ENCODE measurements at regions of chr4 and their contacts with region 1.

Region 1: DNA sequence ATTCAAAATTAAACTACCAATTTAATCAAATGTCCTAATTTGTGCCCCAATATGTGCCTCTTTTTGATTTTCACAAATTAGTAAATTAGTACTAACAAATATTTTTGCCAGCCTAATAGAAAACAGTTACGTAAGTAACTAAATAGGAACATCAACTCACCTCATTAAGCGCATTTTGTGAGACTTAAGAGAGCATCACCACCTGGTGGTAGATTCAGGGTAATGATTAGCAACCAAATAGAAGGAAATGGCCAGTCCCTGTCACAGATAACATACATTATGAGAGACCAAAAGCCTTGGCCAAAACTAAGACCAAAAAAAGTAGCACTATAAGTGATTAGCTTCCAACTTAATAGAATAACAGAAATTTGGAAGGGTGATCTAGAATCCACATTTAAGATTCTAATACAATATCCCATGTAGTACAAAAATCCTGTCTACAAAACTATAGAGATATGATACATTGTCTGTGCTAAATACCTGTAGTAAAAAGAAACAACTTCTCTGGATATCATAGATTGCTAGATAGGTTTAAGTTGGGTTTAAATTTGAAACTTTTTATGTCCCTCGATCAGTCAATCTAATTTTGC is 46.7 kb downstream of the C4orf46 start:
- DNase-seq: peak; percentile 84
- H3K4me3 ChIP-seq: no peak overlapping the region
- H3K27ac ChIP-seq: no peak overlapping the region
- H3K4me1 ChIP-seq: no peaks in the 10 kb centered on the region
- H3K27me3 ChIP-seq: no peaks in the 10 kb centered on the region

Region 2: DNA sequence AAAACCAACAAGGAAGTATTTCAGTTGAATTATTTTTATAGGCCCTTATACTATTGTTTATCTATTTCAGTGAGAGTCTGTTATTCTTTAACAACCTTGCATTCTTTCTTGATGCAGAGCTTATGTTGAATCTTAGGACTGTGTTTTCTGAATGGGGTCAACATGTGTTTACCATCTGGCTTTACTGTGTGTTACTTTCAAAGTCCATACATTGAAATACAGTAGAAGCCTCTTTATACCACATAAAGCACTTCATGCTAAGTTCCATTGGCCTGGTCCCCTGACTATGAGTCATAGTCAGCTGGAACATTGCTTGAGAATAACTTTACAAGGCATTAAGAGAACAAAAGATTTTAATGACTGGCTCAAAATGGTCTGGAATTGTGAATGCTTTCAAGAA is 604.8 kb before region 1 on chr4:
- in situ Hi-C with region 1: loop called (anchors 25 kb)
- DNase-seq: peak; percentile 84
- H3K4me3 ChIP-seq: peak overlapping the region; percentile 40; the same call in 1 of the 2 replicates
- H3K27ac ChIP-seq: peak overlapping the region; percentile 81
- H3K4me1 ChIP-seq: peaks cover 50% of the 10 kb centered on the region
- H3K27me3 ChIP-seq: no peaks in the 10 kb centered on the region

Region 3: DNA sequence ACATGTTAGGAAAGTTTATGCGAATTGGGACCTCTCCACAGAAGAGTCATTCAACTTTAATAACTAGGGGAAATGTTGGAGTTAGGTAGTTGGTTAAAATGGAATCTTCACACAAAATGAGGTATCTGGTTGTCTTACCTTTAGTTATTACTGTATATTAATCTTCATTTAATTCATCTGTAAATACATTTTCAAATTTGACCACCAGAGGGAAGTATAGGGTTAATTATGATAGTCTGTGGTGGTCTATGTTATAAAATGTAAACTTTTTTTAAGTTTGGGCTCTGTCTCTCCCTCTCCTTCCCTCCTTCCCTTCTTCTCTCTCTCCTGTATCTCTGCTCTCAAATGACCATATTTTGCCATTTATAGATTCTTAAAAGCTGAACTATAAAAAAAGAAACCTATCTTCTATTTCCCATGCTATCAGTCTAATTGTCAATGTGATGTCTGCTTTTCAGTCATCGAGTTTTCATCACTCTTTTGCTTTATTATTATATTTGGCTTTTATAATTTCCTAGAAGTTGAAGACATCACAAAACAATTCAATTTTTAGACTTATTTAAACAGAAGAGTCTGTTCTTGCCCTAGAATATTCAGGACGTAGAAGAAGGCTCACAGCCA is 364.9 kb before region 1 on chr4:
- in situ Hi-C with region 1: loop called (anchors 5 kb)
- DNase-seq: peak; percentile 41
- H3K4me3 ChIP-seq: peak overlapping the region; percentile 40
- H3K27ac ChIP-seq: no peak overlapping the region
- H3K4me1 ChIP-seq: peaks cover 5% of the 10 kb centered on the region; the same call in 1 of the 2 replicates
- H3K27me3 ChIP-seq: no peaks in the 10 kb centered on the region

Measured in GM23248 (cell line).